Activated CD8-positive, alpha-beta memory T cell treated with anti-CD3 and anti-CD28 coated beads, Interleukin-2, amount 10 ng/mL, durations not matched to agents 7 days and 5 days (primary cell): ENCODE measurements at regions of chr1 and their contacts with region 1.

Region 1: DNA sequence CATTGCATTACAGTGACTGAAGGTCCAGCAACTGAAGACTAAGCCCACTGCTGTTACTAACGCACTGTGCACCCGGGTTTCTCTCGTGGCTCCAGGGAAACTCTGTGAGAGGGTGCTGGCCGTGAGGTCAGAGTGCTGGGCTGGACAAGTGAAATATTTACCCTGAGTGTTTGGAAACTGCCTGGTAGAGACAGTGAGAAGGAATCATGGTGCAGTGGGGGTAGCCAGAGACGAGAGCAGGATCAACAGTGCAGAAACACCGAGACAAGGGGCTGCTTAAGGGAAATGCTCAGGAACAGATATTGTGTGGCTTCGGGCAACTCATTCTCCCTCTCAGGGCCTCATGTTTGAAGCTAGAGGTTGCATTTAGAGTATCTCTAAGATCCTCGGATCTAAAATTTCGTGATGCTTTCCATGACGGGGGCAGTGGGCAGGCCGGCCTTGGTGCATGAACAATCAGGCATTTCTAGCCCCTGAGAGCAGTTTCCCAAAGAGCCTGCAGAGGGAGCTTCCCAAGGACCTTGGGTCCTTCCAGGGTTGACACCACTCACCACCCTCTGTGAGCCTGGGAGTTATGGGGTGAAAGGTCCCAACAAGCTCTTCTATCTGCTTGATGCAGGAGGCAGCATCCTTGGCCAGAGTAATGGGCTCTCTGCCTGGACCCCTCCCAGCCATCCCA is 9.7 kb downstream of the CD2 start:
- DNase-seq: peak; percentile 83
- ATAC-seq: peak; percentile 20
- H3K4me3 Mint-ChIP-seq: peak overlapping the region; percentile 65
- H3K27ac Mint-ChIP-seq: peak overlapping the region; percentile 97
- H3K4me1 Mint-ChIP-seq: peaks cover 96% of the 10 kb centered on the region
- H3K27me3 Mint-ChIP-seq: no peaks in the 10 kb centered on the region

Region 2: GRCh38 chr1:116826818-116827606 is 63.1 kb after region 1 on chr1:
- CTCF ChIA-PET with region 1: interaction called, 17 read pairs
- DNase-seq: peak; percentile 87
- ATAC-seq: peak; percentile 90
- H3K4me3 Mint-ChIP-seq: peak overlapping the region; percentile 66
- H3K27ac Mint-ChIP-seq: peak overlapping the region; percentile 96
- H3K4me1 Mint-ChIP-seq: peaks cover 54% of the 10 kb centered on the region
- H3K27me3 Mint-ChIP-seq: no peaks in the 10 kb centered on the region